WTC11 (cell line): ENCODE measurements at regions of chr4 and their contacts with region 1.

Region 1: GRCh38 chr4:122732329-122733026 is at the start of gene BBS12:
- DNase-seq: peak; percentile 100
- ATAC-seq: peak; percentile 97
- H3K4me3 Mint-ChIP-seq: peak within 1 kb of the TSS; percentile 90
- H3K27ac Mint-ChIP-seq: peak within 1 kb of the TSS; percentile 96
- H3K4me1 Mint-ChIP-seq: peaks cover 10% of the 10 kb centered on the region
- H3K27me3 Mint-ChIP-seq: no peaks in the 10 kb centered on the region
- CTCF ChIP-seq: no peak
- total RNA-seq, gene BBS12: 2.1 to 2.7 TPM (median 2.3 TPM) in 3 replicates

Region 2: GRCh38 chr4:122602277-122603142 is 130.0 kb before region 1 on chr4:
- CTCF ChIA-PET with region 1: interaction called, 13 read pairs
- POLR2A ChIA-PET with region 1: no interaction called
- DNase-seq: no peak
- ATAC-seq: peak; percentile 66
- H3K4me3 Mint-ChIP-seq: no peak overlapping the region
- H3K27ac Mint-ChIP-seq: no peak overlapping the region
- H3K4me1 Mint-ChIP-seq: peaks cover 32% of the 10 kb centered on the region
- H3K27me3 Mint-ChIP-seq: no peaks in the 10 kb centered on the region
- CTCF ChIP-seq: no peak